Activated CD4-positive, alpha-beta memory T cell treated with anti-CD3 and anti-CD28 coated beads, Interleukin-2, amount 10 ng/mL, durations not matched to agents 7 days and 5 days (primary cell): ENCODE measurements at regions of chr1 and their contacts with region 1.

Region 1: DNA sequence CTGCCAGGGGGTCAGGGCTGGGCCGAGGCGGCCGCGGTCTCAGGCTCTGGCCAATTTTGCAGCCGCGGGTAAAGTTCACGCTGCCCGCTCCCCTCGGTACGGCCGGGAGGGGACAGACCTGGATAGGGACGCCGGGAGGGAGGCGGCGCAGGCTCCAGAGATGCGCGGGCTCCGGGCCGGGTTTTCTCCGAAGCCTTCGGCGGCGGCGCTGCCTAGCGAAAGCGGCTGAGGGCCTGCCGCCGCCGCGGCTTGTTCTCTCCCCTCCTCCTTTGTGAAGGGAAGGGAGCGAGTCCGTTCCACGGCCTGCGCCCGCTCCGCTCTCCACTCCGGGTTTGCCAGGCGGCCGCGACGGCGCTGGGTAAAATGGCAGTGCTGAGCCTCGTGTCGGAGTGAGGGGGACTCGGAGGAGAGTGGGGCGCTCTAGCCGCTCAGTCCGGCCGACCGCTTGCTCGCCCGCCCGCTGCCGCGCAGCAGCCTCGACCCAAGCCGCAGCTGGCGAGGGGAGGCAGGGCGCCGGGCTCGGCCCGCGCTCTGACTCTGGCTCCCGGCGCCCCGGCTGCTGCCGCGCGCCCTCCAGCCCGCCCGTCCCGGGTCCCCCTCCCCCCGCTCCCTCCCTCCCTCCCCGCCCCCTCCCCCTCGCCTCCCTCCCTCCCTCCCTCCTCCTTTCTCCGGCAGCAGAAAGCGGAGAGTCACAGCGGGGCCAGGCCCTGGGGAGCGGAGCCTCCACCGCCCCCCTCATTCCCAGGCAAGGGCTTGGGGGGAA is at the start of gene ARID1A:
- DNase-seq: peak; percentile 98
- H3K4me3 Mint-ChIP-seq: peak within 1 kb of the TSS; percentile 85
- H3K27ac Mint-ChIP-seq: peak within 1 kb of the TSS; percentile 94
- H3K4me1 Mint-ChIP-seq: peaks cover 32% of the 10 kb centered on the region
- H3K27me3 Mint-ChIP-seq: no peaks in the 10 kb centered on the region
- total RNA-seq, gene ARID1A: 88.9 to 90.0 TPM

Region 2: GRCh38 chr1:26472901-26473845 is 222.4 kb before region 1 on chr1:
- CTCF ChIA-PET with region 1: no interaction called
- POLR2A ChIA-PET with region 1: interaction called, 14 read pairs
- DNase-seq: peak; percentile 97
- H3K4me3 Mint-ChIP-seq: peak overlapping the region; percentile 90
- H3K27ac Mint-ChIP-seq: peak overlapping the region; percentile 66
- H3K4me1 Mint-ChIP-seq: peaks cover 52% of the 10 kb centered on the region
- H3K27me3 Mint-ChIP-seq: no peaks in the 10 kb centered on the region

Region 3: GRCh38 chr1:26574719-26575251 is 120.8 kb before region 1 on chr1:
- CTCF ChIA-PET with region 1: no interaction called
- POLR2A ChIA-PET with region 1: no interaction called
- DNase-seq: no peak
- H3K4me3 Mint-ChIP-seq: no peak overlapping the region
- H3K27ac Mint-ChIP-seq: no peak overlapping the region
- H3K4me1 Mint-ChIP-seq: peaks cover 32% of the 10 kb centered on the region
- H3K27me3 Mint-ChIP-seq: no peaks in the 10 kb centered on the region

Region 4: GRCh38 chr1:26602378-26602959 is 93.1 kb before region 1 on chr1:
- CTCF ChIA-PET with region 1: interaction called, 10 read pairs
- POLR2A ChIA-PET with region 1: interaction called, 8 read pairs
- DNase-seq: peak; percentile 38
- H3K4me3 Mint-ChIP-seq: no peak overlapping the region
- H3K27ac Mint-ChIP-seq: no peak overlapping the region
- H3K4me1 Mint-ChIP-seq: peaks cover 11% of the 10 kb centered on the region
- H3K27me3 Mint-ChIP-seq: peaks cover 20% of the 10 kb centered on the region

Region 5: DNA sequence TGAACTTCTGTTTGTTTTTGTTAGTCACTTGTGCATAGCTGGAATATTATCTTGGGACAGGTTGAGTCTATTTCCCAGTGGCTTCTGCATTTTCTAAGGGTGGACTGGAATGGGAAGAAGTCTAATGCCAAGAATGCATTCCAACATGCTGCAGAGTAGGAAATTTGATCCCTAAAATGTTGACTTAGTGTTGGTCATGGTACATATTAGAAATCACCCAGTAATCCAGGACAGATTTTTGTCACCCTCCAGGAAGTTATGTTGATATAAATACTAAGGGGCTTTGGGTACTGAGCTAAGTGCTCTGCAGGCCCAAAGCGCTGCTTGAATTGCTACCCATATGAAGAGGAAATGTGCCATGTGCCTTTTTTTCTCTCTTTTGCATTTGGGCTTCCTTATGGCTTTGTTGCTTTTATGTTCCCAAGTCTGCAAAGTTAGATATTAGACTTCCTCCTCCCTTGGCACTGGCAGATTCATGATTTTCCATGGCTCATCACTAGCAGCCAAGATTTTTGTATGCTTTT is 10.3 kb after region 1 on chr1:
- CTCF ChIA-PET with region 1: interaction called, 16 read pairs
- POLR2A ChIA-PET with region 1: interaction called, 75 read pairs
- DNase-seq: no peak
- H3K4me3 Mint-ChIP-seq: no peak overlapping the region
- H3K27ac Mint-ChIP-seq: no peak overlapping the region
- H3K4me1 Mint-ChIP-seq: peaks cover 33% of the 10 kb centered on the region
- H3K27me3 Mint-ChIP-seq: no peaks in the 10 kb centered on the region

Region 6: DNA sequence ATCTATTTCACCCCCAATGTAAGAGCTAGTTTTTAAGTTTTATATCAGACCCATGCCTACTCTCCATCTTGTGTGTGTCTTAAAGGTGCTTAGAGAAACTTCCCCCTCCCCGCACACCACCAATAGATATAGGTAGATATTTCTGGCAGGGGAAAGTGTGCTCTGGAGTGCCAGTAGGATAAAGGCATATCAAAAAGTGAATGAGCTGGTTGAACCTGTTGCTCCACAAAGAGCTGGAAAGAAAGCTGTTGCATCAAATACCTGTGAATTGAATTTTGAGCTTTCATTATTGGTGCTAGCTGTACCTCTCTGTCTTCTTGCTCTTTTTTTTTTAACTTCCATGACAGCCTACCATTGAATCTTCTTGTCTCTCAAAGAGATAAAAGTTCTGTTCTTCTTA is 33.1 kb after region 1 on chr1:
- CTCF ChIA-PET with region 1: interaction called, 5 read pairs
- POLR2A ChIA-PET with region 1: interaction called, 32 read pairs
- DNase-seq: no peak
- H3K4me3 Mint-ChIP-seq: no peak overlapping the region
- H3K27ac Mint-ChIP-seq: no peak overlapping the region
- H3K4me1 Mint-ChIP-seq: peaks cover 67% of the 10 kb centered on the region
- H3K27me3 Mint-ChIP-seq: no peaks in the 10 kb centered on the region

Region 7: DNA sequence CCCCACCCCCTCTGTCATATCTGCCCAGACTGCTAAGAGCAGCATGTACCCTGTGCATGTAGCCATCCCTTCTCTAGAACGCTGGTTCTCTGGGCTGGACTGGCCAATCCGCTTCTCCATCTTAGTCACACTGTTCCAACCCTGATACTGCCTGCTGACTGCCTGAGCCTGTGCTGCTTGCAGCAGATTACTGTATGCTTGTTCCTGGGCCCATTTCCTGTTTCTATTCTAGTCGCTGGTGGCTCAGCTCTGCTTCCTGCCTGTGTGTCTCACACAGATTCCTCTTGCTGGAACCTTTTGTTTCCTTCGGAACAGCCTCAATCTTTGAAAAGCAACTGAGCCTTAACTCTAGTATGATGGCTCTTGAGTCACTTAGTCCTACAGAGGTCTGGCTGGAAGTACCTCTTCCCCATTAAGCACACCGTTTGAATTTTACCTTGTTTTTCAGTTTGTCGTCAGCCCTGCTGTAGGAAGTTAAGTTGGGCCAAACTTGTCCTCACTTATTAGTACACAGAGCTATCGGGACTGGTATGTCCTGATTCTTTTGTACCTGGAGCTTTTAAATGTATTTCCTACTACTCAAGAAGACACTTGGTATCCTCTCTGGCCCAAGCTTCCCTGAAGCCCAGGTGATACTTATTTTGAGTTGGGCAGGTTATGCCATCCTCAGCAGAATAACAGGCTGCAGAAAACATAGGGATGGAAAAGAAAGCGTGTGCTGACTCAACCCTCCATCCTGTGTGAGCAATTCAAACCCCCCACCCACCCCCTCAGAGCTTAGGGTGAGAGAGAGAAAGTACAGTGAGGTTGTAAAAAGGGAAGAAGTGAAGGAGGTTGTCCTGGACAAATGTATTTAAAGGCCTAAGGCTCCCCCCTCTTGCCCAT is 48.8 kb after region 1 on chr1:
- CTCF ChIA-PET with region 1: interaction called, 7 read pairs
- POLR2A ChIA-PET with region 1: interaction called, 204 read pairs
- DNase-seq: peak; percentile 90
- H3K4me3 Mint-ChIP-seq: peak overlapping the region; percentile 51
- H3K27ac Mint-ChIP-seq: peak overlapping the region; percentile 91
- H3K4me1 Mint-ChIP-seq: peaks cover 77% of the 10 kb centered on the region
- H3K27me3 Mint-ChIP-seq: no peaks in the 10 kb centered on the region

Region 8: DNA sequence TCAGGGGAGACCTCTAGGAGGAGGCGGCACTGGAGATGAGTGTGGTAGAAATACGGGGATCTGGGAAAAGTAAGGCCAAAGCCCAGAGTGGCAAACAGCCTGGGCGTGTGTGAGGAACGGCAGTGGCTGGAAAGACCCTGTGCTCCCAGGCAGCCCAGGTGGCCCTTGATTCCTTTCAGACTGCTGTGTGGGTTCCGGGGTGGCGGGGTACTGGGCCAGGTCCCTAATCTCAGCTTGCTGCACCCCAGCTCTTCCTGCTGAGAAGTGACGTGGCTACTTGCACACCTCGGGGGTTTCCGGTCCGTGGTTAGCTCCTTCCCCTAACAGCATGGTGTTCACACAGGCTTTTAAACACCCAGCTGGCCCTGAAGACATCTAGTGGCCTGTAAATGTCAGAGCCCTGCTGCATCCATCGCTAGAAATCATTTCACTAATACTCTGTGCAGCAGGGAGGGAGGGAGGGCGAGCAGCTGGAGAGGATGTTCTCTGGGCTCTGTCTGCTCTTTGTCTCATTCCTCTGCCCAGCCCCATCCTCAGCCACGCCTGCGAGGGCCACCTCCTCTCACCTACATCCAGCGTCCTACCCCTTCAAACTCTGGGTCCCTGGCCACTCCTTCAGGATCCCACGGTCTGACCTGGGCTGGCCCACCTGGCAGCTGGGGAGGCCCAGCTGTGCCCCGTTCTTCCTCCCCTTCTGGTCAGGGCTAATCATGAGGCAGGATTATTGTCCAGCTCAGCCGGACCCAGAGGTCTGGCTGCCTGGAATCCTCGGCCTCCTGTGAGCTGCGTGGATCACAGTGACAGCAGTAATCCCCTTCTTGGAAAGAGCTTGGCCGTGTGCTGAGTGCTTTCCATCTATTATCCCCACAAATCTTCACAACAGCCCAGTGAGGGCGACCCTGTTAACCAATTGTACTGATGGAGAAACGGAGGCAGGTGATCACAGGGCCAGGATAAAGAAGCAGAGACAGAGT is 138.2 kb after region 1 on chr1:
- CTCF ChIA-PET with region 1: interaction called, 8 read pairs
- POLR2A ChIA-PET with region 1: interaction called, 13 read pairs
- DNase-seq: peak; percentile 94
- H3K4me3 Mint-ChIP-seq: peak overlapping the region; percentile 66
- H3K27ac Mint-ChIP-seq: peak overlapping the region; percentile 99
- H3K4me1 Mint-ChIP-seq: peaks cover 80% of the 10 kb centered on the region
- H3K27me3 Mint-ChIP-seq: no peaks in the 10 kb centered on the region

Region 9: DNA sequence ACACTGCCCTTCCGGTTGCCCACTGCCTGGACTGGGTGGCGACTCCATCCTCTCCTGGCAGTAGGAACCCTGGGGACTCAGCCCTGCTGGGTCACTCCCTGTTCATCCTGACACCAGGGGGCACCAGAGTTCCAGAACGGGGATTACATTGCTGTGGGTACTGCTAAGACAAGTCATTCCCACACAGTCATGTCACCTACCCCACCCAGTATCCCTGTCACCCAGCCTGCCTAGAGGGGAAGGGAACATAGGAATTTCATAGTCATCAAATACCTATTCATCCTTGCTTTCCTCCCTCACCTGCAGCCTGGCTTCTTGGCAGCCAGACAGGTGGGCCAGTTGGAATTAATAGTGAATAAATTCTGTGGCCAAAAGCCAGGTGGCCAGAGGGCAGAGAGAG is 157.6 kb after region 1 on chr1:
- CTCF ChIA-PET with region 1: no interaction called
- POLR2A ChIA-PET with region 1: no interaction called
- DNase-seq: peak; percentile 76
- H3K4me3 Mint-ChIP-seq: no peak overlapping the region
- H3K27ac Mint-ChIP-seq: no peak overlapping the region
- H3K4me1 Mint-ChIP-seq: peaks cover 3% of the 10 kb centered on the region
- H3K27me3 Mint-ChIP-seq: no peaks in the 10 kb centered on the region